ENCODE measurements at regions of chr14 and their contacts with region 1.

Region 1: DNA sequence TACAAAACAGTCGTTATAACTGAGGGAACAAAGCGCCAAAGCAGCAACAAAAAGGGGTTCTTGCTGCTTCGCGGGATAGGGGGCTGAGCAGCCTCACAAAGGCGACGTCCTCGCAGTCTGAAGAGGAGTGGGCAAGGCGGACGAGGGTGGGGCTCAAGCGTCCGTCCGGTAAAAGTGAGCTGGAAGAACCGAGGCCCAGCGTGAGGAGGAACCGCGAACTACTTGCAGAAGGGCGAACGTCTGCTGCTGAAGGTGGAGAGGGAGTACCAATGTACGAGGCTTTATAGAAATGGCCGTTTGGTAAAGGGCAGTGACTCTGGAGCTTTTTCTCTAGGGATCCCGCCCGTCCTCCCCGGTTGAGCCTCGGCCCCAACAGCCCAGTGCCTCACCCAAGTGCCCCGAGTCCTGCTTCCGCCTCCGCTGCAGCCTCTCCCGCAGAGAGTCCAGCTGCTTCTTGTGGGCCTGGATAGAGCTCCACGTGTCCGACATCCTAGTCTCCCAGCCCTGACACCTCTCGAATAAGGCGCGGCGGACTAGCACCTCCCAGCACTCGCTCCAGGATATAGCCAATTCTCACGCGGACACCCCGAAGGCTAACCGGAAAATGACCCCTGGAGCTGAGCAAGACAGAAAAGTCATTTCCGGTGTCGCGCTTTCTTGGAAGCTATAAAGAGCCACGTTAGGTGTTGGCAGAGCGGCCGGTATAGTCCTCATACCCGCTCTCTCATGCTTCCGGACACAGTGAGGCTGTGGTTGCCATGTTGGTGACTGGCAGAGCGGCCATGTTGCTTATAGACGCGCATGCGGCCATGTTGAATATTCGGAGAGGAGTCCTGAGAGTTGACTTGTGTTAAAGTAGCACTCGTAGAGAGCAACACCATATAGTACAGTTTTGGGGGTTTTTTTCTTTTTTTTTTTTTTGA is at the start of gene METTL3:
- DNase-seq: peak; percentile 99
- H3K4me3 ChIP-seq: peak within 1 kb of the TSS; percentile 75 to 91 (median 84)
- H3K27ac ChIP-seq: peak within 1 kb of the TSS; percentile 71
- H3K4me1 ChIP-seq: peaks cover 11% of the 10 kb centered on the region
- H3K27me3 ChIP-seq: peaks cover 2 to 12% of the 10 kb centered on the region in 2 experiments
- CTCF ChIP-seq: no peak
- POLR2A ChIP-seq: peak; percentile 73
- total RNA-seq, gene METTL3: 63.1 and 65.0 TPM in 2 replicates

Region 2: DNA sequence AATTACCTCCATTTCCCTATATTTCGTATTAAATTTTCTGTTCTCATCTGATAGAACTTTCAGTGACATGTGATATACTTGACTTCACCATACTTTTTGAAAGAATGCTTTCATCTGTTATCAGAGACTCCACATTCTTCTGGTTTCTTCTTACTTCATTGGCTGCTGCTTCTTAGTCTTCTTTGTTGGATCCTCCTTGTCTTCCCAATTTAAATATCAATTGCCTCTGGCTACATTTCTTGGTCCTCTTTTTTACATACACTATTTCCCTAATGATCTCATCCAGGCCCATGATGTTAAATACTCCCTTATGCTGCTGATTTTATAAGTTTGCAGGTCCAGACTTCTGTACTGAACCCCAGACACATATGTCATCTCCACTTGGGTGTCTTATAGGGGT is 377.1 kb before region 1 on chr14:
- CTCF ChIA-PET with region 1: no interaction called
- POLR2A ChIA-PET with region 1: no interaction called
- dilution Hi-C with region 1: no loop called
- intact Hi-C with region 1: no loop called
- DNase-seq: no peak
- H3K4me3 ChIP-seq: no peak overlapping the region
- H3K27ac ChIP-seq: no peak overlapping the region
- H3K4me1 ChIP-seq: no peaks in the 10 kb centered on the region
- H3K27me3 ChIP-seq: no peaks in the 10 kb centered on the region
- CTCF ChIP-seq: no peak
- POLR2A ChIP-seq: no peak

Region 3: DNA sequence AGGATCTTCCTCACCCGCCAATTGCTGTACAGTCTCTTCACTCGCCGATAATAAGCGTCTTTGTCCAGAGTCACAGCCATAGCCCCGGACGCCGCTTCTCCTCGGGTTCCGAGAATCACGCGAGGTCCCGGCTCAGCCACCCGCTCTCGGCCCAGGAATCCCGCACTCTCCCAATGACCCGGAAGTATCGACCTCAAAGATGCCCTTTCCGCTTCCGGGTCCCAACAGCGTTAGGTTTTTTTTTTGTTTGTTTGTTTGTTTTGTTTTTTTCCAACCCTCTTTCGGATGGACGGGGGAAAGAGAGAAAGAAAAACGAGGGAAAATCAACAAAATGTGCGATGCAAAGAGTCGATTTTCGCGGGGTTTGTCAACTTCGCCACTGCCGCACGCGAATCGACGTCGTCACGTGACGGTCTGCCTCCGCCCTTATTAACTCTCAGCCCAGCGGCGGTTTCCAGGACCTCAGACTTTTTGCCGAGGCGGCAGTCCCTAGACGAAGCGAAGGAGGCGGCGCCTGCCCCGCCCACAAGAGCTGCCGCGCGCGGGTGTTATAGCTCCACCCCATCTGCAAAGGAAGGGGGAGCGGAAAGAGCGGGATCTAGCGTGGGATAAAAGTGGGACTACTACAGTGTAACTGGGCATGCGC is 127.0 kb before region 1 on chr14 and contains the start of gene SUPT16H:
- CTCF ChIA-PET with region 1: no interaction called
- POLR2A ChIA-PET with region 1: interaction called, 3 read pairs
- dilution Hi-C with region 1: no loop called
- intact Hi-C with region 1: loop called (anchors 1 kb)
- DNase-seq: peak; percentile 98
- H3K4me3 ChIP-seq: peak within 1 kb of the TSS; percentile 56 to 68 (median 68)
- H3K27ac ChIP-seq: peak within 1 kb of the TSS; percentile 86
- H3K4me1 ChIP-seq: peaks cover 29% of the 10 kb centered on the region
- H3K27me3 ChIP-seq: no peaks in the 10 kb centered on the region
- CTCF ChIP-seq: no peak
- POLR2A ChIP-seq: peak; percentile 61
- total RNA-seq, gene SUPT16H: 94.2 and 100 TPM in 2 replicates

Region 4: GRCh38 chr14:21476925-21477681 is 33.9 kb before region 1 on chr14 and contains the starts of genes RAB2B and TOX4:
- CTCF ChIA-PET with region 1: interaction called, 10 read pairs
- POLR2A ChIA-PET with region 1: interaction called, 7 read pairs
- dilution Hi-C with region 1: no loop called
- intact Hi-C with region 1: loop called (anchors 1 kb)
- DNase-seq: peak; percentile 99
- H3K4me3 ChIP-seq: peak within 1 kb of the TSS; percentile 69 to 95 (median 93)
- H3K27ac ChIP-seq: peak within 1 kb of the TSS; percentile 97
- H3K4me1 ChIP-seq: peaks cover 20% of the 10 kb centered on the region
- H3K27me3 ChIP-seq: no peaks in the 10 kb centered on the region
- CTCF ChIP-seq: peak; percentile 91 to 99
- POLR2A ChIP-seq: peak; percentile 15
- total RNA-seq, gene RAB2B: 29.1 and 30.6 TPM in 2 replicates
- total RNA-seq, gene TOX4: 63.2 and 67.4 TPM in 2 replicates

Region 5: GRCh38 chr14:21498553-21499526 is 12.2 kb before region 1 on chr14:
- CTCF ChIA-PET with region 1: interaction called, 65 read pairs
- POLR2A ChIA-PET with region 1: no interaction called
- dilution Hi-C with region 1: no loop called
- intact Hi-C with region 1: no loop called
- DNase-seq: peak; percentile 55
- H3K4me3 ChIP-seq: no peak overlapping the region
- H3K27ac ChIP-seq: no peak overlapping the region
- H3K4me1 ChIP-seq: no peaks in the 10 kb centered on the region
- H3K27me3 ChIP-seq: no peaks in the 10 kb centered on the region
- CTCF ChIP-seq: peak; percentile 34 to 42
- POLR2A ChIP-seq: peak; percentile 10

Region 6: DNA sequence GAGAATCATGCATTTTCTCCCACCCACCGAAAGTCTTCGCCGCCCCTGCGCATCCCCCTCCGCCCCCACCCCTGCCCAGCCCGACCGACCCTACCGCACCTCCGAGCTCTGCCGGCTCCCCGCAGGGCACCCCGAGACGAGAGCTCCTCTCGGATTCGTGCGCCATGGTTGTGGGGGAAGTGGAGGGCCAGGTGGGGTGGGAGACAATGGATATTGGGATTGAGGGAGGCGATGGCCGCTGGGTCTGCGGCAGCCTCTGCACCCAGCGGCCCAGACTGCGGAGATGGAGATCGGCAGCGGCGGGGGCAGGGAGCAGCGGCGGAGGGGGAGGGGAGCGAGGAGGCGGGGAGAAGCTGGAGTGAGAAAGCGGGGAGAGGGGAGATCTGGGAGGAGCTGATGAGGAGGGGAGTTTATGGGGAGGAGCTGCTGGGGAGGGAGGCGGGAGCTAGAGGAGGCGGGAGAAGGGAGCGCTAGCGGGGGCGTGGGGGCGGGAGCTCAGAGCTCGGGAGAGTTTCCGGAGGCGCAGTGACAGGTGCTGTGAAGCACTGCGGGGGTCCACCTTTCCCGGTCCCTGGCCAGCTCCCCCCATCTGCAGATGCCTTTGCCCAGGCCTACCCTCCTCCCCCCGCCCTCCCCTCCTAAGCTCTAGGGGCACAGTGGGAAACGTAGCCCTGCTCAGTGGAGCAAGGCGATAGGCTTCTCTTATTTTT is 15.1 kb after region 1 on chr14 and contains the start of gene SALL2:
- CTCF ChIA-PET with region 1: interaction called, 8 read pairs
- POLR2A ChIA-PET with region 1: interaction called, 19 read pairs
- dilution Hi-C with region 1: no loop called
- intact Hi-C with region 1: loop called (anchors 1 kb)
- DNase-seq: peak; percentile 63
- H3K4me3 ChIP-seq: peak within 1 kb of the TSS; percentile 32 to 80 (median 67)
- H3K27ac ChIP-seq: no peak within 1 kb of the TSS
- H3K4me1 ChIP-seq: peaks cover 3% of the 10 kb centered on the region
- H3K27me3 ChIP-seq: peaks cover 20 to 21% of the 10 kb centered on the region in 2 experiments
- CTCF ChIP-seq: no peak
- POLR2A ChIP-seq: no peak
- total RNA-seq, gene SALL2: 4.6 and 6.8 TPM in 2 replicates

Region 7: DNA sequence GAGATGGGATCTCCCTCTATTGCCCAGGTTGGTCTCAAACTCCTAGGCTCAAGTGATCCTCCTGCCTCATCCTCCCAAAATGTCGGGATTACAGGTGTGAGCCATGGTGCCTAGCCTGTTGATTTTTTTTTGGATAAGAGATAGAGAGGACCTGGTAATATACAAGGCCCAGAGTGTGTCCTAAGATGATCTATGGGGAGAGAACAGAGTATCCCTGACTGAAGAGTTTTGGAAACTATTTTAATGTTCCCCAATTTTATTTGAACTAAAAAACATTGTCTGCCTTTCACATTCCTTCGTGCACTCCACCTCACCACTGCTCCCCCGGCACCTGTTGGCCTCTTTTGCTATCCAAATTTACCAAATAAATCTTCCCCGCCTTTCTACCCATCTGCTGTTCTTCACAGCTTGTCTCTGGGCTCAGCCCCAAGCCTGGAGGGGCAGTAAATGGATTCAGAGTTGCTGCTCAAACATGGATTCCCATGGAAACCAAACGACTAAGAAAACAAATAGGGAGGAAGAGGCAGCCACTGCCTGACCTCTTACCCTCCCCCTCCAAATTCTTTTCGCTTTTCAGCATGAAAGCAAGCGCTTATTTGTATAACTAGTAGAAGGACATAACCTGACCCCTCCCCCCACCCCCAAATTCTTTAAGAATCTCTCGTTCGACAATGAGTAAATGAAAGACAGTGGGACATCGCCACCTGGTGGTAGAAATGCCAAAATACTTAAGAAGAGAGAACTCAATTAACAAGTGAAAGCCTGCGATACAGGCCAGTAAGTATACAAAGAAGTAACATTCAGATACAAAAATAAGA is 46.3 kb after region 1 on chr14:
- CTCF ChIA-PET with region 1: interaction called, 17 read pairs
- POLR2A ChIA-PET with region 1: no interaction called
- dilution Hi-C with region 1: no loop called
- intact Hi-C with region 1: loop called (anchors 1 kb)
- DNase-seq: peak; percentile 88
- H3K4me3 ChIP-seq: peak overlapping the region in 2 of 3 experiments; percentile 25 to 30
- H3K27ac ChIP-seq: no peak overlapping the region
- H3K4me1 ChIP-seq: peaks cover 5% of the 10 kb centered on the region
- H3K27me3 ChIP-seq: no peaks in the 10 kb centered on the region
- CTCF ChIP-seq: peak; percentile 35 to 58
- POLR2A ChIP-seq: no peak

Region 8: GRCh38 chr14:21680072-21680471 is 169.1 kb after region 1 on chr14:
- CTCF ChIA-PET with region 1: no interaction called
- POLR2A ChIA-PET with region 1: no interaction called
- dilution Hi-C with region 1: no loop called
- intact Hi-C with region 1: no loop called
- DNase-seq: peak; percentile 50
- H3K4me3 ChIP-seq: no peak overlapping the region
- H3K27ac ChIP-seq: no peak overlapping the region
- H3K4me1 ChIP-seq: peaks cover 4% of the 10 kb centered on the region
- H3K27me3 ChIP-seq: no peaks in the 10 kb centered on the region
- CTCF ChIP-seq: no peak
- POLR2A ChIP-seq: no peak

Region 9: DNA sequence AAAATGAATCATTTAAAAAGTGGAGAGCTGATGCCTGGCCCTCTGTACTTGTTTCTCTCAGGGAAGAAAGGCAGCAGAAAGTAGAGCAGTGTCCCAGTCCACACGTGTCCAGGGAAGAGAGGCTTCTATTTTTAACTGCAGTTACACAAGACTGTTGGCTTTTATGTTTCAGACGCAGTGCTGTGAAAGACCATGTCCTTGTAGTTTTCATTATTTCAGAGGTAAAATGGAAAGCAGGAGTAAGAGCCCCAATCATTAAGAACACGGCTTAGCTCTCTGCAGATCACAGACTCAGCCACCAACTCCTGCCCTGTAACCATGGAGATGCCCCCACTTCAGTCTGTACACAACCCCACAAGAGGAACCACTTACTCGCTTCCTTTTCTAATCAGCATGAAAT is 741.7 kb after region 1 on chr14:
- CTCF ChIA-PET with region 1: no interaction called
- POLR2A ChIA-PET with region 1: no interaction called
- dilution Hi-C with region 1: no loop called
- intact Hi-C with region 1: no loop called
- DNase-seq: no peak
- H3K4me3 ChIP-seq: no peak overlapping the region
- H3K27ac ChIP-seq: no peak overlapping the region
- H3K4me1 ChIP-seq: no peaks in the 10 kb centered on the region
- H3K27me3 ChIP-seq: peaks cover 2 to 15% of the 10 kb centered on the region in 2 experiments
- CTCF ChIP-seq: no peak
- POLR2A ChIP-seq: no peak